Ovary (tissue), 10 donors: ENCODE measurements at regions of chr10 and their contacts with region 1.

Region 1: DNA sequence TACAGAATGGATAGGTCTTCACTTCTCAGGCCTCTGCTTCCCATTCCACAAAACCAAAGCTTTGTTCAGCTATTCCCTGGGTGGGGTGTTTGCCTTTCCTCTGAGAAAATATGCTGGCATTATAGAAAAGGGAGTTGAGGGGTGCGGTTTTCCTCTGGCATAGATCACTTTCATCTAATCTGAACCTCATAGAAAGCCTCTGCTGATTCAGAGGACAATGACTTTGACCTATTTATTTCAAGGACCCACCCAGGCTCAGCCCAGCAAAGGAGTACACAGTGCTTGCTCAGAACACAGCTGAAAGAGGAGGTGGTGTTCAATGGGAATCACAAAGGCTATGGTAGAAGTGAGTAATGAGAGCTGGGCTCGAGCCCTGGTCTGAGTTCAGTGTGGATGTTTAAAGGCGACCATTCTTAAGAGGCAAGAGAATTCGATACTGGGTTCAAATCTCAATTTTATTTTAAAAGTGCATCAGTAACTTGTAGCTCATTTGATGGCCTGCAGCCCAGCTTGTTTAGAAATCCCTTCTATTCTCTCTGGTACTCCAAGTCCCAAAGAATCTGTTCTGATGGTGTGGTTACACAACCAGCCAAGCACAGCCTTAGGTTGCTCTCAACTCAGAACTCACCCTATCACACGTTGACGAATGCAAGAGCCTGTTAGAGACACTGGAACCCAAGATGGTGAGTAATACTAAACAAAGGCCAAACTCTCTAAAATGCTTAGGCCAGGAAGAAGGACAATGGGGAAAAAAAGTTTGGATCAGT is 1012.8 kb downstream of the LRMDA start:
- DNase-seq: peak in 1 of 5 donors; percentile 44
- H3K4me3 ChIP-seq: no peak overlapping the region
- H3K27ac ChIP-seq: no peak overlapping the region
- H3K4me1 ChIP-seq: no peaks in the 10 kb centered on the region
- H3K27me3 ChIP-seq: no peaks in the 10 kb centered on the region
- CTCF ChIP-seq: no peak
- EP300 ChIP-seq: no peak
- POLR2A ChIP-seq: no peak

Region 2: DNA sequence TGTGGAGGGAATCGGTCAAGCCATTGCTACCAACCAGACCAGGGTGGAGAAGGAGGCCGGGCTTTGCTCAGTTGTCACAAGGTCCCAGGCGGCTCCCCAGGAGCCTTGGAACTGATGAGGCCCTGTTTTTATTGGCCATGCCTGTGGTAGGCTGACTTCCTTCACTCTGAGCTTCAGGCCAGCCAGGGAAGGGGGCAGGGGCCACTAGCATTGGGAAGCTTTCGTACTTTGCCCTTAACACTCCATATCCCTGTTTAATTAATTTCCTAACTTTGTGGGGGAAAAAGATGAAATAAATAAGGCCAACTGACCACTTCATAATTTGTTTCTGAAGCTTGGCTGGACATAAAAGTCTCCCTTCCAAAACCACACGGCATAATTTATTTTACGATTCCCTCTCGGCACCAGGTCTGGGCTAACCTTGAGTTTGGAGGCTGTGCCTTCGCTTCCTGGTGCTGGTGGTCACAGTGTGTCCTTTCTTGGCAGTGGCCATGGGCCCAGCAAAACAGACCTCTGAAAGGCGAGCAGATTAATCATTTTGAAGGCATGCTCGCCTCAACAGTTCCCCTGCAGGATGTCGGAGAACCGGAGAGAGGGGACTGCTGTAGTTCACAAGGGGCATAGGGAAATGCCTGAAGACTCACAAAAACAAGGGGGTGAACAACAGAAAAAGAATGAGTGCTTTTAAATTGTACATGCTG is 46.9 kb before region 1 on chr10:
- intact Hi-C with region 1: loop called in 1 of 4 experiments (anchors 1 kb)
- DNase-seq: peak in 4 of 5 donors; percentile 25 to 69 (median 48)
- H3K4me3 ChIP-seq: no peak overlapping the region
- H3K27ac ChIP-seq: no peak overlapping the region
- H3K4me1 ChIP-seq: no peaks in the 10 kb centered on the region
- H3K27me3 ChIP-seq: no peaks in the 10 kb centered on the region
- CTCF ChIP-seq: no peak
- EP300 ChIP-seq: no peak
- POLR2A ChIP-seq: no peak

Region 3: GRCh38 chr10:76643511-76643911 is 199.3 kb after region 1 on chr10:
- intact Hi-C with region 1: no loop called
- DNase-seq: peak in 1 of 5 donors; percentile 42
- H3K4me3 ChIP-seq: no peak overlapping the region
- H3K27ac ChIP-seq: no peak overlapping the region
- H3K4me1 ChIP-seq: peaks cover 3% of the 10 kb centered on the region
- H3K27me3 ChIP-seq: no peaks in the 10 kb centered on the region
- CTCF ChIP-seq: no peak
- EP300 ChIP-seq: no peak
- POLR2A ChIP-seq: no peak